CD4-positive, alpha-beta memory T cell (primary cell): ENCODE measurements at regions of chr13 and their contacts with region 1.

Region 1: DNA sequence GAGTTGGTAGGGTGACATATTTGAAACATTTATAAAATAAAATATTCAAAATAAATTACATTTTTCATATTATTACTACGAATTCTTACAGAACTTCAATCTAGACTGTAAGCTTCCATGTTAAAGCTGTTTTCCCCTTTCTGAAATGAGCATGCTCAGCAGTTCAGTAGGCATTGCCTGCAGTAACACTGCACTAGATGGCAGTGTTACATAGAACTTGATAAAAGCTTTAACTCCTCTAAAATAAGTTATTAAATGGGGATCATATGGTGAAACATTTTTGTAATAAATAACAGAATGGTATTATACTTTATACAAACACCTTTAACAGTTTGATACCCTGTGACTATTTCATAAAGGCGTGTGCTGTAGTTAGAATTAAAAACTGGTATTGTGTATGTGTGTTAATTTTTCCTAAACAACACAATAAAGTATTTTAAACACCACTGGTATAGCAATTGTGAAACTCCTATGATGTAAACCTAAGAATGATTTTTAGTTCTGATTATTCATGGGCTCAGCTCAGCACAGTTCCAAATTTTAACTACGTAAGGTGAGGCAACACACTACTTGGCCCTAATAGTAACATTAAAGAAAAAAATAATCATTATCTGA is 11.6 kb upstream of the GPR18 start:
- DNase-seq: peak; percentile 57 to 71 (median 63)
- H3K4me3 ChIP-seq: no peak overlapping the region
- H3K4me3 Mint-ChIP-seq: peak overlapping the region in 2 of 8 donors; percentile 53 to 67
- H3K27ac ChIP-seq: peak overlapping the region; percentile 42
- H3K27ac Mint-ChIP-seq: peak overlapping the region; percentile 23 to 98 (median 92)
- H3K4me1 ChIP-seq: peaks cover 59% of the 10 kb centered on the region
- H3K4me1 Mint-ChIP-seq: peaks cover 43 to 72% (median 58%) of the 10 kb centered on the region in 4 donors
- H3K27me3 ChIP-seq: no peaks in the 10 kb centered on the region
- H3K27me3 Mint-ChIP-seq: no peaks in the 10 kb centered on the region

Region 2: GRCh38 chr13:98517576-98518310 is 752.0 kb before region 1 on chr13:
- CTCF ChIA-PET with region 1: no interaction called
- POLR2A ChIA-PET with region 1: no interaction called
- intact Hi-C with region 1: no loop called
- DNase-seq: peak; percentile 65 to 84 (median 71)
- H3K4me3 ChIP-seq: no peak overlapping the region
- H3K4me3 Mint-ChIP-seq: peak overlapping the region in 7 of 8 donors; percentile 43 to 78 (median 67)
- H3K27ac ChIP-seq: peak overlapping the region; percentile 52
- H3K27ac Mint-ChIP-seq: peak overlapping the region; percentile 76 to 96 (median 91)
- H3K4me1 ChIP-seq: peaks cover 100% of the 10 kb centered on the region
- H3K4me1 Mint-ChIP-seq: peaks cover 71 to 100% (median 89%) of the 10 kb centered on the region in 4 donors
- H3K27me3 ChIP-seq: no peaks in the 10 kb centered on the region
- H3K27me3 Mint-ChIP-seq: no peaks in the 10 kb centered on the region

Region 3: GRCh38 chr13:99200432-99201167 is 69.1 kb before region 1 on chr13 and contains the start of gene UBAC2:
- CTCF ChIA-PET with region 1: interaction called, 325 read pairs
- POLR2A ChIA-PET with region 1: interaction called, 75 read pairs
- intact Hi-C with region 1: loop called (anchors 1 kb)
- DNase-seq: peak; percentile 95 to 99 (median 98)
- H3K4me3 ChIP-seq: peak within 1 kb of the TSS; percentile 79 to 89
- H3K4me3 Mint-ChIP-seq: peak within 1 kb of the TSS; percentile 93 to 100 (median 99)
- H3K27ac ChIP-seq: peak within 1 kb of the TSS; percentile 97
- H3K27ac Mint-ChIP-seq: peak within 1 kb of the TSS; percentile 85 to 98 (median 97)
- H3K4me1 ChIP-seq: peaks cover 61% of the 10 kb centered on the region
- H3K4me1 Mint-ChIP-seq: peaks cover 45 to 69% (median 55%) of the 10 kb centered on the region in 4 donors
- H3K27me3 ChIP-seq: no peaks in the 10 kb centered on the region
- H3K27me3 Mint-ChIP-seq: no peaks in the 10 kb centered on the region
- total RNA-seq, gene UBAC2: 88.4 to 89.0 TPM

Region 4: GRCh38 chr13:99258210-99258860 is 11.4 kb before region 1 on chr13 and contains the start of gene GPR18:
- CTCF ChIA-PET with region 1: interaction called, 20 read pairs
- POLR2A ChIA-PET with region 1: interaction called, 11 read pairs
- intact Hi-C with region 1: no loop called
- DNase-seq: peak; percentile 50 to 69 (median 62)
- H3K4me3 ChIP-seq: peak within 1 kb of the TSS; percentile 52 to 67
- H3K4me3 Mint-ChIP-seq: peak within 1 kb of the TSS; percentile 89 to 98 (median 94)
- H3K27ac ChIP-seq: peak within 1 kb of the TSS; percentile 60
- H3K27ac Mint-ChIP-seq: peak within 1 kb of the TSS; percentile 84 to 96 (median 94)
- H3K4me1 ChIP-seq: peaks cover 55% of the 10 kb centered on the region
- H3K4me1 Mint-ChIP-seq: peaks cover 47 to 85% (median 59%) of the 10 kb centered on the region in 4 donors
- H3K27me3 ChIP-seq: no peaks in the 10 kb centered on the region
- H3K27me3 Mint-ChIP-seq: no peaks in the 10 kb centered on the region
- total RNA-seq, gene GPR18: 21.5 to 22.8 TPM

Region 5: GRCh38 chr13:99314640-99315176 is 45.0 kb after region 1 on chr13:
- CTCF ChIA-PET with region 1: interaction called, 217 read pairs
- POLR2A ChIA-PET with region 1: interaction called, 349 read pairs
- intact Hi-C with region 1: loop called (anchors 5 kb)
- DNase-seq: peak; percentile 77 to 86 (median 83)
- H3K4me3 ChIP-seq: peak overlapping the region; percentile 26 to 46
- H3K4me3 Mint-ChIP-seq: peak overlapping the region; percentile 76 to 88 (median 80)
- H3K27ac ChIP-seq: peak overlapping the region; percentile 73
- H3K27ac Mint-ChIP-seq: peak overlapping the region; percentile 88 to 99 (median 98)
- H3K4me1 ChIP-seq: peaks cover 87% of the 10 kb centered on the region
- H3K4me1 Mint-ChIP-seq: peaks cover 61 to 86% (median 74%) of the 10 kb centered on the region in 4 donors
- H3K27me3 ChIP-seq: no peaks in the 10 kb centered on the region
- H3K27me3 Mint-ChIP-seq: no peaks in the 10 kb centered on the region

Region 6: DNA sequence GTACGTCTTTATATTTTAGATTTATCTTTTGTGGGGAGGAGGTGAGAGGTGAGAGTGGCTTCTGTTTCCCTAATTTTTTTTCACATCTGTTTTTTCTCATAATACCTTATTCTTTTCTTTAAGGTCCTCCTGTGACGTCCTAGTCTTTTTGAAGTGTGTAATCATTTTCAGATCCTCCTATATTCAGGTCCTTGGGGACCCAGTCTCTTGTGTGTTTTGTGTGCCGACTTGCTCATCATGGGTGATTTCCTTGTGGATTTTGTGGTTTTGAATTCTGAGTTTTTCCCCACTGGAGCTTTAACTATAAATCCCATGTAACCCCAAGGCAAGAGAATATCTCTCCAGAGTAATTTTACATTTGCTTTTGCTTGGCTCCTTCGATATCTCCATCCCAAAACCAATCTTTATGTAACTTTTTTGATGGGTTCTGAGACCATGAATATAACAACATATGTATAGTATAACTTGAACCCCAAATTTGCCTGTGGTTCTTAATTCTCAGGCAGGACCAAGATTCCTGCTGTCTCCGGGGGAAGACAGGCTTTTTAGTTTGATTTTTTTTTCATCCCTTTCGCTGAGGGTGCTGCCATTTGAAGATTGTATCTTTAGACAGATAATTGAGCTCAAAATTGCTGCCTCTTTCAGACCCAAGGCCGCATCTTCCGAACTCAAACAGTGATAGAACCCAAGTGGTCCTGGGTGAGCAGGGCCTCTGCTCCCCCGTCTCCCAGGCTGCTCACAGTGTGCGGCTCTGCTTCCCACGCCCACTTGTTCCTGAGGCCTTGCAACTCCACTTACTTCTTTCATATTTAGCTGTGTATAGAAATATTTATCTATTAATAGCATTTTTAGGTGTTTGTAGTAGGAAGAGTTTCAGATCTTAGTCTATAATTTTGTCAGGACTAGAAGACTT is 96.6 kb after region 1 on chr13:
- CTCF ChIA-PET with region 1: interaction called, 67 read pairs
- POLR2A ChIA-PET with region 1: interaction called, 23 read pairs
- intact Hi-C with region 1: no loop called
- DNase-seq: no peak
- H3K4me3 ChIP-seq: peak overlapping the region in 1 of 2 donors; percentile 22
- H3K4me3 Mint-ChIP-seq: peak overlapping the region; percentile 41 to 93 (median 78)
- H3K27ac ChIP-seq: peak overlapping the region; percentile 70
- H3K27ac Mint-ChIP-seq: peak overlapping the region; percentile 96 to 98 (median 97)
- H3K4me1 ChIP-seq: peaks cover 98% of the 10 kb centered on the region
- H3K4me1 Mint-ChIP-seq: peaks cover 73 to 98% (median 85%) of the 10 kb centered on the region in 4 donors
- H3K27me3 ChIP-seq: no peaks in the 10 kb centered on the region
- H3K27me3 Mint-ChIP-seq: no peaks in the 10 kb centered on the region

Region 7: DNA sequence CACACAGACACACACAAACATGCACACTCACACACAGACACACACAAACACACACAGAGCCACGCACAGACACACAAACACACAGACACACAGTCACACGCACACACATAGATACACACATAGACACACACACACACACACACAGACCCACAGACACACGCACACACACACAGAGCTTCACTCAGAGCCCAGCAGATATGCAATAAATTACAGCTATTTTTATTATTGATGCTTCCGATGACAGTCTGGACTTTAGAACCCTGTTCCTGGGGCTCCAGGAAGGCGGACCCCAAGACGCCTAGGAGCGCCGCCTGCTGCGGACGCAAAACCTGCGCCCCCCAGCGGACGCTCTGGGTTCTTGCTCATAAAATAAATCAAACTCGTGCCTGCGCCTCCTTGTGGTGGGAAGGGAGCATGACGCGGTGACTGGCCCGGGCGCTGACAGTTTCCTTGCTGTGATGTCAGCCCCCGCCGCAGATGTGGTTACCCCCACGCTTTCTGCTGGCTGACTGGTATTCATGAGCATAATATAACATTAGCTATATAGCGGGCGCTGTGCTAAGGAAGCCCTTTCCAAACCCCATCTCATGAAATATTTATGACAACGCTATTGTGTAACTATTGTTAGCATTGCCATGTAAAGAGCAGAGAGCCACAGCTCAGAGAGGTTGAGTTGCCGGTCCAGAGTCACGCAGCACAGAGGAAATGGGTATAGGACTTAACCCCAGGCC is 167.1 kb after region 1 on chr13:
- CTCF ChIA-PET with region 1: interaction called, 564 read pairs
- POLR2A ChIA-PET with region 1: interaction called, 84 read pairs
- intact Hi-C with region 1: loop called (anchors 1 kb)
- DNase-seq: peak; percentile 92 to 95 (median 94)
- H3K4me3 ChIP-seq: peak overlapping the region in 1 of 2 donors; percentile 15
- H3K4me3 Mint-ChIP-seq: peak overlapping the region; percentile 19 to 85 (median 52)
- H3K27ac ChIP-seq: no peak overlapping the region
- H3K27ac Mint-ChIP-seq: peak overlapping the region; percentile 48 to 100 (median 90)
- H3K4me1 ChIP-seq: peaks cover 57% of the 10 kb centered on the region
- H3K4me1 Mint-ChIP-seq: peaks cover 40 to 58% (median 51%) of the 10 kb centered on the region in 4 donors
- H3K27me3 ChIP-seq: no peaks in the 10 kb centered on the region
- H3K27me3 Mint-ChIP-seq: peaks cover 0 to 3% of the 10 kb centered on the region in 2 donors